CD4-positive, alpha-beta memory T cell (primary cell): ENCODE measurements at regions of chr3 and their contacts with region 1.

Region 1: DNA sequence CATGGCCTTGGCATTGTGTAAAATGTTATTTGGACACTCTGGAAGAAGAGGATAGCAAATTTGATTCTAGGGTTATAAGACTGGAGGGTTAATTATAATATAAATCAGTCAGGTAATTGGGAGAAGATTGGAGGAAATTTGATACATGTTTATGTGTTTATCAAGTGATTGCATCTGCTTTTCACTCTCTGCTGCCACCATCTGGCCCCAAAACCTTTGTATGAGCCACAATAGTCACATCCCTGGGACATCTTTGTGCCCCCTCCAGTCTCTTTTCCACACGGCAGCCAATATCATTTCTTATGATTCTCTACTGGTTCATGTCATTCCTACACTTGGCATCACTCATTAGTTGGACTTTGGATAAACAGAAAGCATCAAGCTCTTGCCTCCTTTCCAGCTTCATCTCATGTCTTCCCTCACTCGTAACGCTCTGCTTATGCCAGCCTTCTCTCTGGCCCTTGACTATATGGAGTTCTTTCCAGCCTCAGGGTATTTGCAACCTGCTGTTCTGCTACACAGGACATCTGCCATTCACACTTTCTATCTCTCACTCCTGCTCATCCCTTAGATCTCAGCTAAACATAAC is 602.3 kb upstream of the SUCLG2 start:
- DNase-seq: peak; percentile 3 to 23 (median 13)
- H3K4me3 ChIP-seq: no peak overlapping the region
- H3K4me3 Mint-ChIP-seq: no peak overlapping the region
- H3K27ac ChIP-seq: no peak overlapping the region
- H3K27ac Mint-ChIP-seq: no peak overlapping the region
- H3K4me1 ChIP-seq: no peaks in the 10 kb centered on the region
- H3K4me1 Mint-ChIP-seq: peaks cover 0 to 5% (median 0%) of the 10 kb centered on the region in 4 donors
- H3K27me3 ChIP-seq: no peaks in the 10 kb centered on the region
- H3K27me3 Mint-ChIP-seq: no peaks in the 10 kb centered on the region

Region 2: GRCh38 chr3:66983101-66983500 is 1273.6 kb before region 1 on chr3:
- CTCF ChIA-PET with region 1: no interaction called
- POLR2A ChIA-PET with region 1: no interaction called
- intact Hi-C with region 1: no loop called
- DNase-seq: no peak
- H3K4me3 ChIP-seq: no peak overlapping the region
- H3K4me3 Mint-ChIP-seq: no peak overlapping the region
- H3K27ac ChIP-seq: no peak overlapping the region
- H3K27ac Mint-ChIP-seq: no peak overlapping the region
- H3K4me1 ChIP-seq: no peaks in the 10 kb centered on the region
- H3K4me1 Mint-ChIP-seq: no peaks in the 10 kb centered on the region
- H3K27me3 ChIP-seq: no peaks in the 10 kb centered on the region
- H3K27me3 Mint-ChIP-seq: peaks cover 0 to 1% of the 10 kb centered on the region in 2 donors

Region 3: DNA sequence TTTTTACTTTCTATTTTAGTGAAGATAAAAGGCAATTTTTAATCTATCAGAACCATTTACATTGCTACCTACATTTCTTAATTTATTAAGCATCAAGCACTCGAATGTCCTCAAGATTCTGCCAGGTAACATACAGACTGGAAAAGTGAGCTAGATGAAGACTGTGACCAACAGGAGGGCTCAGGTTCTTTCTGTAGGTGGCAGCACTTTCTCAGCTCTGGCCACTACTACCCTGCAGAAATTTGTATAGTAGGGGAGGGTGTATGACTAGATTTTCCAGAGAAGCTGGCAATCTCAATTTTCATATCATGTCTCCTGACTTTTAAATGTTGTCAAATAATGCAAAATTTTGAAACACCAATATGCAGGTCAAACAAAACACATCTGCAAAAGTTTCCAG is 437.3 kb before region 1 on chr3:
- CTCF ChIA-PET with region 1: no interaction called
- POLR2A ChIA-PET with region 1: no interaction called
- intact Hi-C with region 1: loop called (anchors 1 kb)
- DNase-seq: peak in 4 of 5 donors; percentile 8 to 21 (median 12)
- H3K4me3 ChIP-seq: no peak overlapping the region
- H3K4me3 Mint-ChIP-seq: no peak overlapping the region
- H3K27ac ChIP-seq: no peak overlapping the region
- H3K27ac Mint-ChIP-seq: no peak overlapping the region
- H3K4me1 ChIP-seq: no peaks in the 10 kb centered on the region
- H3K4me1 Mint-ChIP-seq: no peaks in the 10 kb centered on the region
- H3K27me3 ChIP-seq: no peaks in the 10 kb centered on the region
- H3K27me3 Mint-ChIP-seq: no peaks in the 10 kb centered on the region

Region 4: DNA sequence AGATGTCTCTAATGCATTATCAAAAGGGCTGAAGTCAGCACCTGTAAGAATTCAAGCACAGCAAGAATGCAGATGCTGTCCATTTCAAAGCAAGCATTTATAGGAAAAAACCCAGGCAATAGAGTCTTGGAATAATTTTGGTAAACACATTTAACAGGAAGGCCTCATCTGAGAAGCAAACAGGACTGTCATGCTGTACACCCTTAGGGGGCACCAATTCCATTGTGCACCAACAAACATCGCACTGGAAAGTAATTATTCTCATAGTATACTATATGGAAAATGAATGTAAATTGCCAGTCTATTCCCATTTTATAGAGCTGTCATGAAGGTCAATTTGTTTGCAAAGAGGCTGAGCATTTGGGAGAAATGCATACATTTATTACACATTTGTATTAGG is 355.0 kb before region 1 on chr3:
- CTCF ChIA-PET with region 1: no interaction called
- POLR2A ChIA-PET with region 1: no interaction called
- intact Hi-C with region 1: loop called (anchors 1 kb)
- DNase-seq: peak in 4 of 5 donors; percentile 3 to 14 (median 10)
- H3K4me3 ChIP-seq: no peak overlapping the region
- H3K4me3 Mint-ChIP-seq: no peak overlapping the region
- H3K27ac ChIP-seq: no peak overlapping the region
- H3K27ac Mint-ChIP-seq: no peak overlapping the region
- H3K4me1 ChIP-seq: peaks cover 8% of the 10 kb centered on the region
- H3K4me1 Mint-ChIP-seq: peaks cover 6 to 8% (median 6%) of the 10 kb centered on the region in 4 donors
- H3K27me3 ChIP-seq: no peaks in the 10 kb centered on the region
- H3K27me3 Mint-ChIP-seq: no peaks in the 10 kb centered on the region

Region 5: DNA sequence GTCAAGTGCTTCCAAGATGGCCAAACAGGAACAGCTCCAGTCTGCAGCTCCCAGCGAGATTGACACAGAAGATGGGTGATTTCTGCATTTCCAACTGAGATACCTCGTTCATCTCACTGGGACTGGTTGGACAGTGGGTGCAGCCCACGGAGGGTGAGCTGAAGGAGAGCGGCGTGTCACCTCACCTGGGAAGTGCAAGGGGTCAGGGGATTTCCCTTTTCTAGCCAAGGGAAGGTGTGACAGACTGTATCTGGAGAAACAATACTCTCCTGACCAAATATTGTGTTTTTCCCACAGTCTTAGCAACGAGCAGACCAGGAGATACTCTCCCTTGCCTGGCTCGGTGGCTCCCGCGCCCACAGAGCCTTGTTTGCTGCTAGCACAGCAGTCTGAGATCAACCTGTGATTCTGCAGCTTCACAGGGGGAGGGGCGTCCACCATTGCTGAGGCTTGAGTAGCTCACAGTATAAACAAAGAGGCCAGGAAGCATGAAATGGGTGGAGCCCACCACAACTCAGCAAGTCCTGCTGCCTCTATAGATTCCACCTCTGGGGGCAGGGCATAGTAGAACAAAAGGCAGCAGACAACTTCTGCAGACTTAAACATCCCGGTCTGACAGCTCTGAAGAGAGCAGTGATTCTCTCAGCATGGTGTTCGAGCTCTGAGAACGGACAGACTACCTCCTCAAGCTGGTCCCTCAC is 308.8 kb before region 1 on chr3:
- CTCF ChIA-PET with region 1: no interaction called
- POLR2A ChIA-PET with region 1: no interaction called
- intact Hi-C with region 1: loop called (anchors 2 kb)
- DNase-seq: peak; percentile 75 to 86 (median 82)
- H3K4me3 ChIP-seq: peak overlapping the region; percentile 24 to 51
- H3K4me3 Mint-ChIP-seq: peak overlapping the region; percentile 81 to 95 (median 84)
- H3K27ac ChIP-seq: no peak overlapping the region
- H3K27ac Mint-ChIP-seq: peak overlapping the region; percentile 59 to 95 (median 86)
- H3K4me1 ChIP-seq: peaks cover 27% of the 10 kb centered on the region
- H3K4me1 Mint-ChIP-seq: peaks cover 21 to 46% (median 29%) of the 10 kb centered on the region in 4 donors
- H3K27me3 ChIP-seq: no peaks in the 10 kb centered on the region
- H3K27me3 Mint-ChIP-seq: no peaks in the 10 kb centered on the region

Region 6: DNA sequence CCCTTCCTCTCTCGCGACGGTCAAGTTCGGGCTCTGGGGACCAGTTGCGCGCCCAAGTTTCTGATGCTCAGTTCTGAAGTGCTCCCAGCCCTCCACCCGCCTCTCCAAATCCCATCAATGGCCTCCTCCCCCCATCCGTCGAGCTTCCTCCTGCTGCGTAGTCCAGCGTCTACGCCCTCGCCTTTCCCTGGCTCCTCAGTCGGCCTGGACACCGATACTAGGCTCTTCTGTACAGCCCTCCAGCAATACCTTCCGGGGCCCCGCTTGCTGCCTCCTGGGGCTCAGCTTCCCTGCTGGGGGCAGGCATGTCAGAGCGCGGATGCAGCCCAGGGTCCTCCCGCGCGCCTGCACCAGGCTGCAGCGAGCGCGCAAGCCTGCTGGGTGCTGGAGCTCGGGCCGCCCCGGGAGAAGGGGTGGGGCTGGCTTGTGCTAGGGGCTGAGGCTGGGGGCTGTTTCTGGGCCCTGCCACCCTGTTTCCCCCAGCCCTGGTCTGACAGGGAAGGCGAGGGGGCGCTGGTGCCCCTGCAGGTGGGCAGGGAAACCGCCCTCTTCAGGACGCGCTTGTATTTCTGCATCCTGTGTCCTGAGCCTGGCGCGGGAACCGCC is 249.0 kb before region 1 on chr3:
- CTCF ChIA-PET with region 1: no interaction called
- POLR2A ChIA-PET with region 1: no interaction called
- intact Hi-C with region 1: loop called (anchors 5 kb)
- DNase-seq: peak; percentile 33 to 39 (median 38)
- H3K4me3 ChIP-seq: peak overlapping the region; percentile 9 to 33
- H3K4me3 Mint-ChIP-seq: peak overlapping the region; percentile 72 to 95 (median 87)
- H3K27ac ChIP-seq: no peak overlapping the region
- H3K27ac Mint-ChIP-seq: peak overlapping the region in 3 of 7 donors; percentile 44 to 75 (median 69)
- H3K4me1 ChIP-seq: no peaks in the 10 kb centered on the region
- H3K4me1 Mint-ChIP-seq: peaks cover 9 to 28% (median 15%) of the 10 kb centered on the region in 4 donors
- H3K27me3 ChIP-seq: peaks cover 9% of the 10 kb centered on the region
- H3K27me3 Mint-ChIP-seq: peaks cover 10 to 12% of the 10 kb centered on the region in 2 donors

Region 7: GRCh38 chr3:69005071-69005790 is 748.5 kb after region 1 on chr3:
- CTCF ChIA-PET with region 1: no interaction called
- POLR2A ChIA-PET with region 1: no interaction called
- intact Hi-C with region 1: no loop called
- DNase-seq: no peak
- H3K4me3 ChIP-seq: no peak overlapping the region
- H3K4me3 Mint-ChIP-seq: no peak overlapping the region
- H3K27ac ChIP-seq: no peak overlapping the region
- H3K27ac Mint-ChIP-seq: peak overlapping the region in 2 of 7 donors; percentile 56 to 57
- H3K4me1 ChIP-seq: no peaks in the 10 kb centered on the region
- H3K4me1 Mint-ChIP-seq: peaks cover 2 to 10% (median 4%) of the 10 kb centered on the region in 4 donors
- H3K27me3 ChIP-seq: no peaks in the 10 kb centered on the region
- H3K27me3 Mint-ChIP-seq: no peaks in the 10 kb centered on the region